ENCODE measurements at regions of chr12 and their contacts with region 1.

Region 1: GRCh38 chr12:12724661-12725545 is 7.7 kb downstream of the CDKN1B start:
- DNase-seq: peak; percentile 88 to 98
- H3K4me3 ChIP-seq: peak overlapping the region; percentile 70 to 75
- H3K27ac ChIP-seq: peak overlapping the region; percentile 96 to 97
- H3K4me1 ChIP-seq: peaks cover 3 to 25% of the 10 kb centered on the region in 2 donors
- H3K27me3 ChIP-seq: no peaks in the 10 kb centered on the region
- CTCF ChIP-seq: peak in 2 of 3 experiments; percentile 7

Region 2: DNA sequence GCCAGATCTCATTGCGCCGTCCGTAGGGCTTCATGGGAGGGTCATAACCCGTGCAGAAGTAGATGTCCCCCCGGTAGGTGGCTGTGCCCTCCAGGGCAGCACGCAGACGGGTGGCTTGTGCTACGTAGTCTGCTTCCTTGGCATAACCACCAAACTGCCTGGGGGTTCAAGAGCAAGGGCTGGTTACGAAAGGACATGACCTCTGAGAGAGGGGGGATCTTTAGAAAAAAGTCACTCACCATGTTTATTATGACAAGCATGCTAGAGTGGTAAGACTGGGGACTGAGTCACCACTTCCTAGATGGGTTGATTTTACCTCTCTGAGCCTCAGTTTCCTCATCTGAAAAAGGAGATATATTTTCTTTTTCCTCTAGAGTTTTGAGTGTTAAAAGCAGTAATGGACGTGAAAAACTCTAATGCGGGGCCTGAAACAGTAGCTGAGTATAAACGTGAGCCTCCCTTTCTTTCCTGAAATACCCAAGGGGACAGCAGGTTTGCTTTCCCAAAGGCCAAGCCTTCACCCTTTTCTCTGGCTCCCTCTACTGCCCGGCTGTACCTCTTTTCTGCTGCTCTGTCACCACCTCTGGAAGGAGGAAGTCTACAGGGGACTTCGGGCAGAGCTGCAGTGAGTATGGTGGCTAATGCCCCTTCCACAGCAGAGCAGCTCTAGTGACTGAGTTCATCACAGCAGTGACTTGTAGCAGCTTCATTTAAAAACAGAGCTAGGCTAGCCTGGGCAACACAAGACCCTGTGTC is 250.6 kb after region 1 on chr12:
- intact Hi-C with region 1: loop called (anchors 10 kb)
- DNase-seq: peak in 1 of 2 donors; percentile 76
- H3K4me3 ChIP-seq: peak overlapping the region in 1 of 2 donors; percentile 35
- H3K27ac ChIP-seq: peak overlapping the region; percentile 87 to 91
- H3K4me1 ChIP-seq: peaks cover 5 to 34% of the 10 kb centered on the region in 2 donors
- H3K27me3 ChIP-seq: no peaks in the 10 kb centered on the region
- CTCF ChIP-seq: peak; percentile 16 to 66 (median 46)

Measured in ascending aorta (tissue), 2 donors.